GM10248 (cell line): ENCODE measurements at regions of chr9 and their contacts with region 1.

Region 1: GRCh38 chr9:37753489-37754190 is at the start of gene TRMT10B:
- DNase-seq: peak; percentile 89
- CTCF ChIP-seq: no peak

Region 2: DNA sequence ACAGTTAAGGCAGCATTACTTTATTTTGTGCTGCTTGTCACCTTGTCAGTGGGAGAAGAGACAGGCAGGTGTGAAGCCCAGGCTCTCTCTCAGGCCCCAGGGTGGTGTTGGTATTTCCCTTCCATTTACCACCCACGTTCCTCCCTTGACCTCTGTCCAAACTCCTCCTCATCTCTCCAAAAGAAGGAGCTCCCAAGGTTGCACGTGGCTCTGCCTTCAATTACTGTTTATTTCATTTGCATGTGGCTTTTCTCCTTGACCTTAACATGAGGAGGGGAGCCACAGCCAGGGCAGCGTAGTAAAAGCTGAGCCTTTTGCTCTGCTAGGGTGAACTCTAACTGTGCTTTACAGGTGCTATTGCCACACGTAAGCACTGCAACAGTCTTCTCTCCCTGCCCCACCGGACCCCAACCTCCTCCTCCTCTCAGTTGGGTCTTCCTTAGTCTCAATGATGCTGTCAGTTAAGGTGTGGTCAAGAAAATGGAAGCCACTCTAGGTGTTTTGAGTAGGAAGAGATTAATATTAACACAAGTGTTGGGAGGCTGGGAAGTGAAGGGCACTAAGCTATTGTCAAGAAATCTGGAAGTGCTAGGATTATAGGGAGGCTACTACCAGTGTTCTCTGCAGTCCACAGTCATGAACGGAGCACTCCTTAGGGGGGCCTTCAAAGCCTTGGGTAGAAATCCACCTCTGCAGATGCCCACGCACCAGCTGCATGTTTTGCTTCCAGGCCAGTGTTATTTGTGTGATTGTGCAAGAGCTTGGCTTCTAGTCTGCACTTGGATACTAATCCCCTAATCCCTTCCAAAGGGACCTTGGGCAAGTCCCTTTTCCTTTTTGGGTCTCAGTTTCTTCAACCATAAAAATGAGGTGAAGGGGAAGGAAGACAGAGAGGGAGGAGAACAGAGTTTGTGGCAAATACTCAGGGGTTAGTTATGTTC is 634.9 kb after region 1 on chr9:
- CTCF ChIA-PET with region 1: no interaction called
- POLR2A ChIA-PET with region 1: interaction called, 10 read pairs
- DNase-seq: no peak
- CTCF ChIP-seq: no peak